ENCODE measurements at regions of chr5 and their contacts with region 1.

Region 1: GRCh38 chr5:65481635-65482295 is at the start of gene ADAMTS6:
- DNase-seq: peak; percentile 64 to 86
- H3K4me3 ChIP-seq: peak within 1 kb of the TSS; percentile 31
- H3K4me1 ChIP-seq: peaks cover 11% of the 10 kb centered on the region
- H3K27me3 ChIP-seq: 0 out of 2 replicates have a peak, but pooled peaks cover 4% of the 10 kb centered on the region

Region 2: DNA sequence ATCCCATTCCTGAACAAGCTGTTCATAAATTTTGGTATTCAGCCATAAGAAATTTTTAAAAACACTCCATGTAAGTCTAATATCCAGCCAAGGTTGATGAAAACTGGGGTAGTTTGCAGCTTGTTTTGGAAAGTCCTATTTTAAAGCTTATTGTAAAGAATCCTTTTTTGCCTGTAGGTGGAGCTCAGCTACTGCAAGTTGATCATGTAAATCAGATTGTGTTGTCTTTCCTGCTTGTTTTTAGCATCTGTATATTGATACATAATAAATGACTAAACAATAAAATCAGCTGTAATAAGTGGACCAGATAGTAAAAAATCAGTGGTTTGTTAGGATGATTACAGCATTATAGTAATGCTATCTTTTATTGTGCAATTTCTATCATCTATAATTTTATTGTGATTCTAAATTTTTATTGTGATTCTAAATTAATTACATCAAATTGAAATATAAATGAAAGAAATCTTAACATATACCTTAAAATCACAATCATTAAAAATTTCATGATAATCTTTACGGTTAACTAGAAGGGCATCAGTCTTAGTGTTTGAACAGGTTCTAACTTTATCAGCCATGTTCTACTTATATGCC is 670.6 kb before region 1 on chr5:
- in situ Hi-C with region 1: loop called (anchors 10 kb)
- DNase-seq: peak; percentile 9 to 57
- H3K4me3 ChIP-seq: no peak overlapping the region
- H3K4me1 ChIP-seq: no peaks in the 10 kb centered on the region
- H3K27me3 ChIP-seq: no peaks in the 10 kb centered on the region

Region 3: DNA sequence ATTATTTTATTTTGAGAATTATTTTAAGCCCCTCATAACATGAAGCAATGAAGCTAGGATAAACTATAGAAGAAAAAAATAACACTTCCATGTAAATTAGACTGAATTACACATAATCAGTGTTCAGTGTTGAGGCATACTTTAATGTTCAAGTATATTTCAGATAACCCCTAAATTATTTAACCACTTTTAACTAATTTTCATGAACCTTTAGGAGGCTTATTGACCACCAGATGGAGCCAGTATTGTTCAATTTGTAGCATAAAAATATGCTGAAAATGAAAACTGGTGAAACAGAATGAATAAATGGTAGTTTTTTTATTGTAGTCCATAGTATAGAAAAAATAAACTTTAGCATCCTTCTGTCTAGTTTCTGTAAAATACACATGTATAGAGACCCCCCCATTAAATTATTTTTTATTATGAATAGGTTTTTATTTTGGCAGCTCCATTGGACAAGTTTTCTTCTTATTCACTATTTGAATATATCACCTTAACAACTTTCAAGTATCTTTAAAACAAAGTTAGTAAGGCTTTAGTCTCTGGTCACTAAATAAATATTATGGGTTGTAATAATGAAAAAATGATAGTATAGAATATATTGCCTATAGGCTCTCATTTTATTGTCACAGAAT is 522.9 kb before region 1 on chr5:
- in situ Hi-C with region 1: loop called (anchors 25 kb)
- DNase-seq: no peak
- H3K4me3 ChIP-seq: no peak overlapping the region
- H3K4me1 ChIP-seq: no peaks in the 10 kb centered on the region
- H3K27me3 ChIP-seq: no peaks in the 10 kb centered on the region

Region 4: DNA sequence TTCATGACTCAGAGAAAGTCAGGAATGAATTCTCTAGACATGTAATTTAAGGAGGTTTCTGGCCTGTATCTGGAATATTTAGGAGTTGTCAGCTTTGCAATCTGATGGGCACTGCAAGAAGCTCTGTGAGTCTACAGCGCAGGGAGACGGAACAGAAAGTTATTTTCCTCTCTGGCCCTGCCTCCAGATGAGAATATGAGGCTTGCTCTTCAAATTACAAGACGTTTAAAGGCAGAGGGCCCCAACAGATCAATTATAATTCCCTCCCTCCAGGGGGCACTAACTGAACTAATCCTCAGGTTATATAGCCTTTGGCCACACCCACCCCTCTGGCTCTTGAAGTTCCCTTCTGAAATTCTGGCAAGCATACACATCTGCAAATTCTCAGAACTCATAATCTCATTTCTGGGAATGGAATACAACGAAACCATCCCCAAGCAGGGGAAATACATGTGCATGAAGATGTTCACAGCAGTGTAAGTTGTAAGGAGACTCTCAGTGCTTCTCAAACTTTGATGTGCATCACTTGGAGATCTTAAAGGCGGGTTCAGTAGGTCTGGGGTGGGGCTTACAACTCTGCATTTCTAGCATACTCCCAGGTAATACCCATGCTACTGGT is 405.4 kb before region 1 on chr5:
- in situ Hi-C with region 1: loop called (anchors 25 kb)
- DNase-seq: peak; percentile 74 to 75
- H3K4me3 ChIP-seq: no peak overlapping the region
- H3K4me1 ChIP-seq: no peaks in the 10 kb centered on the region
- H3K27me3 ChIP-seq: peaks cover 2% of the 10 kb centered on the region; the same call in 1 of the 2 replicates

Region 5: GRCh38 chr5:65535529-65535987 is 53.8 kb after region 1 on chr5:
- in situ Hi-C with region 1: no loop called
- DNase-seq: no peak
- H3K4me3 ChIP-seq: no peak overlapping the region
- H3K4me1 ChIP-seq: peaks cover 3% of the 10 kb centered on the region; the same call in 1 of the 2 replicates
- H3K27me3 ChIP-seq: no peaks in the 10 kb centered on the region